ENCODE measurements at regions of chr5 and their contacts with region 1.

Region 1: GRCh38 chr5:446864-447263 is 3.9 kb downstream of the EXOC3 start:
- DNase-seq: no peak
- H3K4me3 ChIP-seq: no peak overlapping the region
- H3K27me3 ChIP-seq: no peaks in the 10 kb centered on the region
- CTCF ChIP-seq: peak; percentile 63

Region 2: GRCh38 chr5:431001-431710 is 15.7 kb before region 1 on chr5:
- CTCF ChIA-PET with region 1: interaction called, 28 read pairs
- POLR2A ChIA-PET with region 1: no interaction called
- DNase-seq: no peak
- H3K4me3 ChIP-seq: no peak overlapping the region
- H3K27me3 ChIP-seq: no peaks in the 10 kb centered on the region
- CTCF ChIP-seq: peak; percentile 74

Region 3: GRCh38 chr5:458547-459353 is 11.9 kb after region 1 on chr5:
- CTCF ChIA-PET with region 1: interaction called, 17 read pairs
- POLR2A ChIA-PET with region 1: no interaction called
- DNase-seq: peak; percentile 31
- H3K4me3 ChIP-seq: no peak overlapping the region
- H3K27me3 ChIP-seq: no peaks in the 10 kb centered on the region
- CTCF ChIP-seq: no peak

Region 4: DNA sequence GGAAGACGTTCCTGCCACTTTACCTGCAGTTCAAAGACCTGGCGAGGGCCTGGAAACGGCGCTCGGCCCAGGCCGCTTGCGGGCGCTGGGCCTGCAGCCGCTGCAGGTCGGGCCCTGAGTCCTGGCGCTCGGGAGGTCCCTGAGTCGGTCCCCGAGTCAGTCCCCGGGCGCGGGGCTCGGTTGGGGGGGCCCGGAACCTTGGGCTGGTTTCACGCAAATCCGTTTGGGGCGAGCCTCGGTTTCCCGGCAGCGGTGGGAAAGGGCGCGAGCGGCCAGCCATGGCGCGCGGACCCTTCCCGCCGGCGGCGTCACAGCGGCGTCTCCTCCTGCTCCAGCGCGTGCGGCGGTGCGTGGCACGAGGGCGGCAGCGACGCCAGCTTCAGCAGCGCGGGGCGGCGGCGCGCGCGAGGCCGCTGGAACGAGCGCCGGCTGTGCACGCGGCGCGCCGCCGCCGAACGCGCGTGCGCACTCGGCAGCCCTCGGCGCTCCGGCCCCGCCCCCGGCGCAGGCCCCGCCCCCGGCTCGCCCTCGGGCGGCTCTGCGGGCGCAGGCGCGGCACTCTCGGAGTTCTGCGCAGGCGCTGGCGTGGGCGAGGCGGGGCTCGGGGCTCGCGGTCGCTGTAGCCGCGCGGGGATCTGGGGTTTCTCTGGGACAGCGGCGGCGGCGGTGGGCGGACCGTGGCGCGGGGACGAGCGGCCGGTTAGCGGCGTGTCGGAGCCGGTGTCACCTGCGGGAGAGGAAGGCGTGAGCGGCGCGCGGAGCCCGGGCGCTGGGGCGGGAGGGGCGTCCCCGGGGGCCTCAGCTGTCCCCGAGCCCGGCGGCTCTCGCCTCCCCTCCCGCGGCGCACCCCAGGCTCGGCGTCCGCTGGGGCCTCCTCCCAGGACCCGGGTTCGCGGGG is 26.0 kb after region 1 on chr5:
- CTCF ChIA-PET with region 1: interaction called, 11 read pairs
- POLR2A ChIA-PET with region 1: no interaction called
- DNase-seq: no peak
- H3K4me3 ChIP-seq: peak overlapping the region; percentile 77
- H3K27me3 ChIP-seq: no peaks in the 10 kb centered on the region
- CTCF ChIP-seq: no peak